ENCODE measurements at regions of chr17 and their contacts with region 1.

Region 1: DNA sequence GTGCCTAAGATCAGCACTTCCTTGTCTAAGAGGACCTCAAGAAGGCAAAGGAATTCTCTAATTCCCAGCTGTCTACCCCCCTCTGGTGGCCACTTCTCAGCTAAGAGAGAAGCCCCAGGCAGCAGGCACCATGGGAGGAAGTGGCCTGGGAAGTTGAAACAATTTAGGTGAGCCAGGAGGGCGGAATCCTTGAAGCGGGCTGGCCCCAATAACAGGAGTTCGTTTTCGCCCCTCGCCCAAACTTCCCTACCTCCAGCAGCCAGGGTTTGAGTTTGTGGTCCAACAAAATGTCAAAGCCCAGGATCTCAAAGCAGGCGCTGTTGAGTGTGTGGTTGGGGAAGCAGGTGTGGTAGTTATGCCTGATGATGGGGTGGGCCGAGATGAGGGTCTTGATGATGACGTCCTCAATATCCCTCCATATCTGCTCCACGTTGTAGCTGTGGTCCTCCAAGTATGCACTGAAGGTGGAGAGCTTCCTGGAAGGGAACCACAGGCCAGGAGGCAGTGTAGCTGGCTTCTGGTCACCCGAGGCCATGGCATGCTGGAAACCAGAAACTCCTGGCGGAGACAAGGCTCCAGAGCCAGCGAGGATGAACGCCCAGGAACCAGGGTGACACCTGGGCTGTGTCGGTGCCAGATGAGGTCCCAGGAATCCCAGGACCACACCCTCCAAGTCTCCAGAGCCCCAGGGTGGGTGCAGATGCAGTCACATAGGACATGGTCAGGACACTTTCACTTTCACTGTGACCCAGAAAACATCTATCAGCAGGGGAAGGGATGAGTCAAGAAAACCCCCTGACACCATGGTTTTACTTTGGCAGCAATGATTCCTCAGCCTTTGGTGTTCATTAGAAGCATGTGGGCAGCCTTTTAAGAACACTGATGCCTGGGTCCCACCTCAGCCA is 25.6 kb downstream of the TTLL6 start:
- DNase-seq: peak; percentile 54
- ATAC-seq: peak; percentile 84

Region 2: DNA sequence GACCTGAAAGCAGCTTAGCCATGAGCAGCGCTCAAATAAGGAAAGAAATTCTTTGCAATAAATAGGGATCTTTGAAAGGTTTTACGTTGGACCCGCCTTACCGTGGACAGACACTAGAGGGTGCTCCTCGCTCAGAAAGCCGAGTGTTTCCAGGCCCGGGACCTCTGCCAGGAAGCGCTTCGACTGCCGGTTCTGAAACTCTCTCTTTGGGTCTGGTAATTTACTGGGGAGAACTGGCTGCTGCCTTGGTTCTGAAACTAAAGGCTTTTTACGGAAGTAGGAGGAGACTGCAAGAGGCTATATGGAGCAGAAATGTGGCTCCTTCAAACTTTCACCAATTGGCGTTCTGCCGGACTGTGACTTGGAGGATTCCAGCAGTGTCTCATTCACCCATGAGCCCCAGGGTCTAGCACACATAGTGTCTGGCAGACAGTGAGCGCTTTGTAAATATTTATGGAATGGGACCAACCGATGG is 119.6 kb before region 1 on chr17:
- intact Hi-C with region 1: loop called (anchors 5 kb)
- DNase-seq: peak; percentile 90
- ATAC-seq: peak; percentile 77

Region 3: GRCh38 chr17:48724251-48725003 is 67.0 kb before region 1 on chr17:
- intact Hi-C with region 1: loop called (anchors 10 kb)
- DNase-seq: peak; percentile 90
- ATAC-seq: peak; percentile 89

Region 4: DNA sequence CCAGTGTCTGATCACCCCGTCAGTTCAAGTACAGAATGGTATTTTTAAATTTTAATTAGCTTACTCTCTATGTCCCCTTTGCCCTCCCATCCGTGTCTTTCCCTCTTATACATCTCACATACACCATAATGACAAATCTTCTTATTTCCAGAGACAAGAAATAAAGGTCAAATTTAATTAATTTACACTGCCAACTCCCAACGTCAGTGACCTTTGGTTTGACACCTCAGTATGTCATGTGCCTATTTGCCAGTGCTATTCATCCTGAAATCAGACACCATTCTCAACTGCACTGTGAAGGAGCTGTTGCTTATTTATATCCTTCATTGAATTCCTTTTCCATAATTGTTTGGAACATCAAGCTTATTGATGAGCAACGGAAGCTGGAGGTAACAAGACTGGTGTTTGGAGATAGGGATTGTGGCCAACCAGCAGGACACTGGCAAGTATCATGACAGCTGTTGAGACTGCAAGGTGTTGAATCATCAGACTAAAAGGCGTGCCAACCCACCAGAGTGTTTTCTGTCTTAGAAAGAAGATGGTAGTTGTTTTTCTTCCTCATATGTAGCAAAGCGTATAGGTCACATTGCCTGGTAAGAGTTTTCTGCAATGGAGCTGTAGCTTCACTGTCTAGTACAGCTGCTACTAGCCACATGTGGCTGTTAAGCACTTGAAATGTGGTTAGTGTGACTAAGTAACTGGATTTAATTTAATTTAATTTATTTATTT is 52.0 kb after region 1 on chr17:
- intact Hi-C with region 1: no loop called
- DNase-seq: no peak
- ATAC-seq: peak; percentile 30